Endothelial cell of umbilical vein (primary cell): ENCODE measurements at regions of chr1 and their contacts with region 1.

Region 1: GRCh38 chr1:27154991-27155781 is at the start of gene SLC9A1:
- DNase-seq: peak; percentile 95
- H3K4me3 ChIP-seq: peak within 1 kb of the TSS; percentile 33 to 68 (median 48)
- H3K27ac ChIP-seq: peak within 1 kb of the TSS; percentile 74
- H3K4me1 ChIP-seq: peaks cover 38% of the 10 kb centered on the region
- H3K27me3 ChIP-seq: no peaks in the 10 kb centered on the region
- CTCF ChIP-seq: peak; percentile 87 to 95
- POLR2A ChIP-seq: peak; percentile 100
- total RNA-seq, gene SLC9A1: 59.2 and 60.5 TPM in 2 replicates

Region 2: DNA sequence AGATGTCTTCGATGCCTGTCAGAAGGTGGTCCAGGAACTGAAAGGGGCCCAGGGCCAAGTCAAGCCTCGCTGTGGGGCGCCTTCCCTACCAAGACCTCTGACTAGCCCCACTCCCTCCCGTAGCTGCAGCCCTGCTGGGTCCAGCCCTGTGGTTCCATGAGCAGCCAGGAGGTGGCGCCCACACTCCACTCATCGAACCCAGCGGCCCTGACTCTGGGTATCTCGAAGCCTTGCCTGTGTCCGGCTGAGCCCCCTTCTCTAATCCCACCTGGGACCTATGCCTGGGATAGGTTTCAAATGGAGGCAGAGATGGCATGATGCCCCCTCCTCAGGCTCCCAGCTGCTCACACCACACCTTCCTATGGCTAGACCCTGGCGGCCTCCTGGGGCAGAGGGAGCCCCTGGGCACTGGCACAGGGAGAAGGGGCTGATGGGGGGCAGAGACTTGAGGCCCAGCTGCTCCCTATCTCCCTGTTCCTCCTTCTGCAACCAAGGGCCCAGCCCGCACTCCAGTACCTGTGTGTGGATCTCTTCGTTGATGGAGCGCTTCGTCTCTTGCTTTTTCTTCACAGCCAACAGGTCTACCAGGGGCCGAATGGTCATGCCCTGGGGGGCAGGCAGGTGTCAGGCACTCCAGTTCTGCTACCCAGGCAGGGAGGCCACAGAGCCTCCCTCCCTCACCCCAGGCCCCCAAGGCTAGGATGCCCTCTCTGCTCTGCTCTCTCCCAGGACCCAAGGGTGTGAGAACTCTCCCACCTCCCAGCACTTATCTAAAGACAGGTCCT is 52.3 kb before region 1 on chr1:
- CTCF ChIA-PET with region 1: interaction called, 10 read pairs
- POLR2A ChIA-PET with region 1: interaction called, 3 read pairs
- dilution Hi-C with region 1: no loop called
- intact Hi-C with region 1: loop called (anchors 2 kb)
- DNase-seq: peak; percentile 60
- H3K4me3 ChIP-seq: no peak overlapping the region
- H3K27ac ChIP-seq: no peak overlapping the region
- H3K4me1 ChIP-seq: no peaks in the 10 kb centered on the region
- H3K27me3 ChIP-seq: no peaks in the 10 kb centered on the region
- CTCF ChIP-seq: peak; percentile 93 to 98
- POLR2A ChIP-seq: no peak

Region 3: GRCh38 chr1:27111626-27112573 is 43.3 kb before region 1 on chr1:
- CTCF ChIA-PET with region 1: interaction called, 22 read pairs
- POLR2A ChIA-PET with region 1: interaction called, 70 read pairs
- dilution Hi-C with region 1: no loop called
- intact Hi-C with region 1: loop called (anchors 1 kb)
- DNase-seq: peak; percentile 99
- H3K4me3 ChIP-seq: no peak overlapping the region
- H3K27ac ChIP-seq: peak overlapping the region; percentile 78
- H3K4me1 ChIP-seq: peaks cover 34% of the 10 kb centered on the region
- H3K27me3 ChIP-seq: no peaks in the 10 kb centered on the region
- CTCF ChIP-seq: peak; percentile 29 to 33
- POLR2A ChIP-seq: no peak

Region 4: GRCh38 chr1:27122652-27123051 is 32.5 kb before region 1 on chr1:
- CTCF ChIA-PET with region 1: interaction called, 4 read pairs
- POLR2A ChIA-PET with region 1: interaction called, 6 read pairs
- dilution Hi-C with region 1: no loop called
- intact Hi-C with region 1: loop called (anchors 1 kb)
- DNase-seq: peak; percentile 83
- H3K4me3 ChIP-seq: no peak overlapping the region
- H3K27ac ChIP-seq: peak overlapping the region; percentile 14
- H3K4me1 ChIP-seq: peaks cover 22% of the 10 kb centered on the region
- H3K27me3 ChIP-seq: no peaks in the 10 kb centered on the region
- CTCF ChIP-seq: no peak
- POLR2A ChIP-seq: no peak

Region 5: DNA sequence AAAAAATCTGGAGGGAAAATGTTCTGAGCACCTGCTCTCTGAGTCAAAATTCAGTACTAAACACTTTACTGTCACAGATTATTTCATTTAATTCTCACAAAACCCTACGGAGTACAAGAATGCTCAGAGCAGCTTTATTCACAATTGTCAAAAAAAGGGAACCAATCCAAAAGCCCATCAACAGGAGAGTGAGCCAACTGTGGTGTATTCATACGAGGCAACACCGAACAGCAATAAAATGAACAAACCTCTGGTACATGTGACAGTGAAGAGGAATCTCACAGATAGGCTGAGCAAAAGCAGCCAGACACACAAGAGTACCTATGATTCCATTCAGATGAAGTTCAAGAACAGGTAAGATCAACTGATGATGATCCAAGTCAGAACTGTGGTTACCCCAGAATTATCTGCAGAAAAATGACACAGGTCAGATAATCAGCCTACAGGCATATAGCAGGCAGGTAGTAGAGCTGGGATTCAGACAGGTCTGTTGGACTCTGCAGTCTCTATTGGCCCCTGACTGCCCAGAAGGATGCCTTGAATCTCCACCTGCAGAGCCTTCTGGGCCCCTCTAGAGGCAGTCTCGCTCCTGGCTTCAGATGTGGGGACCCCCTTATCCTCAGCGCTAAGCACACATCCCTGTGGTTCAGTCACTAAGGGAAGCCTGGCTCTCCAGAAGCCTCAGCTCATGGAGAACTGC is 19.5 kb before region 1 on chr1:
- CTCF ChIA-PET with region 1: interaction called, 6 read pairs
- POLR2A ChIA-PET with region 1: interaction called, 40 read pairs
- dilution Hi-C with region 1: no loop called
- intact Hi-C with region 1: no loop called
- DNase-seq: no peak
- H3K4me3 ChIP-seq: no peak overlapping the region
- H3K27ac ChIP-seq: no peak overlapping the region
- H3K4me1 ChIP-seq: peaks cover 5% of the 10 kb centered on the region
- H3K27me3 ChIP-seq: no peaks in the 10 kb centered on the region
- CTCF ChIP-seq: no peak
- POLR2A ChIP-seq: no peak

Region 6: DNA sequence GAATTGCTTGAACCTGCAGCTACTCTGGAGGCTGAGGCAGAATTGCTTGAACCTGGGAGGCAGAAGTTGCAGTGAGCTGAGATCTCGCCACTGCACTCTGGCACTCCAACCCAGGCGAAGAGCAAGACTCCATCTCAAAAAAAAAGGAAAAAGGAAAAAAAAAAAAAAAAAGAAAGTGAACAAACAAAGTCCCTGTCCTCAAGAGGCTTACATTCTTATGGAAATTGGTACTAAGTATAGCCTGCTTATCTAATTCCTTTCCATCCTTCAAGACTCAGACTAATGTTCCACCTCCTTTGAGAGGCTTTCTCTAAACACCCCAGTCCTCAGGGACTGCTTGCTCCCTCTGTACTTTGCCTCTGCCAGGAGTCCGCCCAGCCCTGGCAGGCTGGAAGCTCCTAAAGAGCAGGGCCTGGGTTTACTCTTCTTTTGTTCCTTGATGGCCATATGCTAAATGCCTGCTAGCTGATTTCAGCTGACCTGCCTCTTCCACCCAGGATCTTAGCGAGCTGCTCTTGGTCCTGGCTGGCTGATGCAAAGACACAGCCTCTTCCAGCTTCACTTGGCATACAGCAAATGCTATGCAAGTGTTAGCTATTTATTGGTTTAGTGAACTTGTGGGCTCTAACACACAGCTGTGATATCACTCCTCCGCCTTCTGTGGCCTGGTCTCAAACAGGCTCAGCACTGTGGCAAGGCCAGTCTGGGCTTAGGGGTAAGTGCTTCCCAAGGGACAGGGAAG is 10.1 kb before region 1 on chr1:
- CTCF ChIA-PET with region 1: interaction called, 6 read pairs
- POLR2A ChIA-PET with region 1: interaction called, 40 read pairs
- dilution Hi-C with region 1: no loop called
- intact Hi-C with region 1: no loop called
- DNase-seq: no peak
- H3K4me3 ChIP-seq: no peak overlapping the region
- H3K27ac ChIP-seq: no peak overlapping the region
- H3K4me1 ChIP-seq: no peaks in the 10 kb centered on the region
- H3K27me3 ChIP-seq: no peaks in the 10 kb centered on the region
- CTCF ChIP-seq: no peak
- POLR2A ChIP-seq: no peak